Activated CD4-positive, alpha-beta memory T cell treated with anti-CD3 and anti-CD28 coated beads for 36 hours (primary cell): ENCODE measurements at regions of chrX and their contacts with region 1.

Region 1: GRCh38 chrX:20500171-20500865 is 233.6 kb upstream of the RPS6KA3 start:
- DNase-seq: peak; percentile 43
- H3K4me3 Mint-ChIP-seq: no peak overlapping the region
- H3K27ac Mint-ChIP-seq: no peak overlapping the region
- H3K4me1 Mint-ChIP-seq: peaks cover 14% of the 10 kb centered on the region
- H3K27me3 Mint-ChIP-seq: peaks cover 6% of the 10 kb centered on the region

Region 2: DNA sequence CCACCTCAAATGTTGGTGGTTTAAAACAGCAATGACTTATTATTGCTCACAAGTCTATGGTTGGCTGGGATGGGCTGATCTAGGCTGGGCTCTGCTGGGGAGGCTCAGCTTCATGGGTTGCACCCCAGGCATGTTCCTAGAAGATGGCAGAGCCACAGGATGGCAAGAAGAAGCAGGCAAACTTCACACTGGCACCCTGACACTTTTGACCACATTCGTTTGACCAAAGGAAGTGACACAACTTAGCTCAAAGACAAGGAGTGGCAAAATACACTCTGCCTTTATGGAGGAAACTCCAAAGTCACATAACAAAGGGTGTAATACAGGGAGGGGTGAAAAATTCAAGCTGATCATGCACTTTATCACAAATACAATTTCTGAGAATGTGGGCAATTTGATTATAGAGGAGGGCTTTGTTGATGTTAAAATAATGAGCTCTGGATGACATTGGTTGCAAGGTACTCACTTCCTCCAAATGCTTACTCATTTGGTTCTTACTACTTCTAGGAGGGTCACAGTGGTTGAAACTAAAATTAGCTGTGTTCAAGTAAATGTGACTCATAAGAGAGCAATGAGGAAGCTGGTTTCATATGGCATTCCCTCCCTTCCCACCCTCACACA is 15.6 kb after region 1 on chrX:
- CTCF ChIA-PET with region 1: interaction called, 3 read pairs
- POLR2A ChIA-PET with region 1: interaction called, 13 read pairs
- intact Hi-C with region 1: loop called (anchors 1 kb)
- DNase-seq: peak; percentile 37
- H3K4me3 Mint-ChIP-seq: no peak overlapping the region
- H3K27ac Mint-ChIP-seq: peak overlapping the region; percentile 58
- H3K4me1 Mint-ChIP-seq: peaks cover 34% of the 10 kb centered on the region
- H3K27me3 Mint-ChIP-seq: peaks cover 13% of the 10 kb centered on the region

Region 3: DNA sequence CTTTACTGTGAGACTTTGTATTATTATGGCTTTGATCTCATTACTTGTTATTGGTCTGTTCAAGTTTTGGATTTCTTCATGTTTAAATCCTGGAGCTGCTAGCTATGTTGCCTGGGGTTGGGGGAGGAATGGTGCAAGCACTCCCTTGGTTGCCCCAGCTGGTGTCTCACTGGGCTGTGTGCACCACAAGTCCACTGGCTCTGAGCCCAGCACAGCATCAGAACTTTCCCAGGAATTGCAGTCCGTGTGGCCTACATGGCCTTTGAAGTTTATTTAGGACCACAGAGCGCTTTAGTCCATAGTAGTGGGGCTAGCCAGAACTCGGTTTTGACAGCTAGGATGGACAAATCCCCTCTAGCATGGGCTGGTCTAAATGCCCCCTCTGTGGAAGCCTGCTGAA is 45.2 kb after region 1 on chrX:
- CTCF ChIA-PET with region 1: no interaction called
- POLR2A ChIA-PET with region 1: no interaction called
- intact Hi-C with region 1: no loop called
- DNase-seq: no peak
- H3K4me3 Mint-ChIP-seq: no peak overlapping the region
- H3K27ac Mint-ChIP-seq: no peak overlapping the region
- H3K4me1 Mint-ChIP-seq: no peaks in the 10 kb centered on the region
- H3K27me3 Mint-ChIP-seq: no peaks in the 10 kb centered on the region